Caco-2 (cell line): ENCODE measurements at regions of chr18 and their contacts with region 1.

Region 1: GRCh38 chr18:54950221-54950620 is 9.0 kb downstream of the CCDC68 start:
- DNase-seq: peak in 1 of 2 experiments; percentile 9
- H3K4me3 ChIP-seq: no peak overlapping the region
- H3K4me3 Mint-ChIP-seq: no peak overlapping the region
- H3K27ac Mint-ChIP-seq: no peak overlapping the region
- H3K4me1 ChIP-seq: peaks cover 6% of the 10 kb centered on the region
- H3K4me1 Mint-ChIP-seq: peaks cover 7% of the 10 kb centered on the region
- H3K27me3 ChIP-seq: no peaks in the 10 kb centered on the region
- H3K27me3 Mint-ChIP-seq: no peaks in the 10 kb centered on the region
- CTCF ChIP-seq: no peak

Region 2: DNA sequence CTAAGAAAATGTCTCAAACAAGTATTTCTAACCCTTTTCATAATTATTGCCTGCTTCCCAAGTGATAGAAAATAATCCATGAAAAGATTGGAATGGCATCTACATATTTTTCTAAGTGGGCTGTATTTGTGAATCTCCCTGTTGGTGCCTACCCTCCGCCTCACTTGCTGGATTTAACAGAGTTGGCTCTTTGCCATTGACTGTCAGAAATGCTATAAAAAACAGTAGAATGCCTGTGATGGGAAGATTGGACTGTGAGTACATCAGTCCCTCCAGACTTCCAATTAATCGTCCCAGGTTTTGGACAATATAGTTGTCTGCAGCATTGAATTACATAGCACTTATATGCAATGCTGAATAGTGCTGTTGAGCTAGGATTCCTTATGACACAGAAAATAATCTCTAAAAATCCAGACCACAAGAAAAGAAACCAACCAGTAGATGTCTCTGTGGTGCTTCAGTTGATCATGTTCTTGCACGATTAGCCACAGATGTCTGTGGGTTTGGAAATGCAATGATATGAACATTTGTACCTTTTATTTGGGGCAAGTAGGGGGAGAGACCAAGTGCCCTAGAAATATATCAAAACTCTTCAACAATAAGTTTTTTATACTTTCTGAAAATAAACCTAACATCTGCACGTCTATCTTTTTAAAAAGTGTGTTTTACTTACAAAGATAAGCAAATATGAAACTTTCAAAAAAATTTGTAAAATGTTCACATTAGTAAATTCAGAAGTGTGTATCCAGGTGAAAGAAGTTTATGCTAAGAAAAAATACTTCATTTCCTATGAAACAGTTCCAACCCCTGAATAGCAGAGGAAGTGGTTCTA is 270.7 kb before region 1 on chr18:
- CTCF ChIA-PET with region 1: interaction called, 3 read pairs
- POLR2A ChIA-PET with region 1: no interaction called
- intact Hi-C with region 1: loop called (anchors 1 kb)
- DNase-seq: peak in 1 of 2 experiments; percentile 6
- H3K4me3 ChIP-seq: no peak overlapping the region
- H3K4me3 Mint-ChIP-seq: no peak overlapping the region
- H3K27ac Mint-ChIP-seq: no peak overlapping the region
- H3K4me1 ChIP-seq: no peaks in the 10 kb centered on the region
- H3K4me1 Mint-ChIP-seq: no peaks in the 10 kb centered on the region
- H3K27me3 ChIP-seq: no peaks in the 10 kb centered on the region
- H3K27me3 Mint-ChIP-seq: no peaks in the 10 kb centered on the region
- CTCF ChIP-seq: peak; percentile 20 to 30

Region 3: DNA sequence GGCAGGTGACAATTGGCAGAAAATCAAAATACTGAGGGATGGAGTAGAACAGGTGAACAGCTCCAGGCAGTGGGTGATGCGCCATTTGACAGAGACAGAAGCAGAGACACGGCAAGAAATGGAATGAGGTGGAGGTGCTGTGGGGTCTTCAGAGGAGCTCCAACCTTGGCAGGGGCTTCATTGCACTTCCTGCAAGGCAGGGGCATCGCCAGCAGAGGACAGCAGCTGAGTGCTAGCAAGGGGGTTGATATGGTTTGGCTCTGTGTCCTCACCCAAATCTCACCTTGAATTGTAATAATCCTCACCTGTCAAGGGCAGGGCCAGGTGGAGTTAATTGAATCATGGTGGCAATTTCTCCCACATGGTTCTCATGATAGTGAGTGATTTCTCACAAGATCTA is 33.7 kb before region 1 on chr18:
- CTCF ChIA-PET with region 1: no interaction called
- POLR2A ChIA-PET with region 1: no interaction called
- intact Hi-C with region 1: no loop called
- DNase-seq: no peak
- H3K4me3 ChIP-seq: no peak overlapping the region
- H3K4me3 Mint-ChIP-seq: no peak overlapping the region
- H3K27ac Mint-ChIP-seq: peak overlapping the region; percentile 35
- H3K4me1 ChIP-seq: no peaks in the 10 kb centered on the region
- H3K4me1 Mint-ChIP-seq: no peaks in the 10 kb centered on the region
- H3K27me3 ChIP-seq: no peaks in the 10 kb centered on the region
- H3K27me3 Mint-ChIP-seq: no peaks in the 10 kb centered on the region
- CTCF ChIP-seq: no peak